ENCODE measurements at regions of chr9 and their contacts with region 1.

Region 1: GRCh38 chr9:116661037-116661954 is 25.8 kb upstream of the TRIM32 start:
- DNase-seq: peak; percentile 74 to 81
- ATAC-seq: peak; percentile 96 to 99
- H3K4me3 ChIP-seq: no peak overlapping the region
- H3K27ac ChIP-seq: peak overlapping the region; percentile 47 to 66; a peak in 5 of 6 replicates
- H3K4me1 ChIP-seq: peaks cover 19% of the 10 kb centered on the region
- CTCF ChIP-seq: peak; percentile 89
- EP300 ChIP-seq: no peak
- POLR2A ChIP-seq: no peak
- RAD21 ChIP-seq: peak; percentile 91 to 94

Region 2: DNA sequence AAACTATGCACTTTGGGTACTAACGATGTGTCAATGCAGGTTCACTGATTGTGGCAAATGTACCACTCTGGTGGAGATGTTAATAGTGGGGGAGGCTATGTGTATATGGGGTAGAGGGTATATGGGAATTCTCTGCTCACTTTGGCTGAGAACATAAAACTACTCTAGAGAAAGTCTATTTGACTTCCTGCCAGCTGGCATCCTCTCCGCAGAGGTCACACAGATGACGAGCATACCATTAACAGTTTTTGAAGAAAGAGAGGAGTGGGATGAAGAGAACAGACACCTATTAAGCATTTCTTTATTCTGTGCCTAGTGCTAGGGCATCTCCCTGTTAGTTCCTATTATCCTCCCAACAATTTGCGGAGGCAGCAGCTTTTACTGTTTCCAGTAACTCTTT is 32.6 kb before region 1 on chr9:
- CTCF ChIA-PET with region 1: no interaction called
- POLR2A ChIA-PET with region 1: no interaction called
- DNase-seq: no peak
- ATAC-seq: no peak
- H3K4me3 ChIP-seq: no peak overlapping the region
- H3K27ac ChIP-seq: no peak overlapping the region
- H3K4me1 ChIP-seq: no peaks in the 10 kb centered on the region; the same call in 2 of the 3 replicates
- CTCF ChIP-seq: no peak
- EP300 ChIP-seq: no peak
- POLR2A ChIP-seq: no peak
- RAD21 ChIP-seq: no peak

Region 3: GRCh38 chr9:116646661-116647512 is 14.4 kb before region 1 on chr9:
- CTCF ChIA-PET with region 1: interaction called, 19 read pairs
- POLR2A ChIA-PET with region 1: no interaction called
- DNase-seq: peak; percentile 21 to 53
- ATAC-seq: peak; percentile 90 to 95
- H3K4me3 ChIP-seq: no peak overlapping the region
- H3K27ac ChIP-seq: peak overlapping the region; percentile 47 to 64
- H3K4me1 ChIP-seq: peaks cover 7% of the 10 kb centered on the region; the same call in 2 of the 3 replicates
- CTCF ChIP-seq: peak; percentile 91
- EP300 ChIP-seq: no peak
- POLR2A ChIP-seq: no peak
- RAD21 ChIP-seq: peak; percentile 82 to 84

Region 4: DNA sequence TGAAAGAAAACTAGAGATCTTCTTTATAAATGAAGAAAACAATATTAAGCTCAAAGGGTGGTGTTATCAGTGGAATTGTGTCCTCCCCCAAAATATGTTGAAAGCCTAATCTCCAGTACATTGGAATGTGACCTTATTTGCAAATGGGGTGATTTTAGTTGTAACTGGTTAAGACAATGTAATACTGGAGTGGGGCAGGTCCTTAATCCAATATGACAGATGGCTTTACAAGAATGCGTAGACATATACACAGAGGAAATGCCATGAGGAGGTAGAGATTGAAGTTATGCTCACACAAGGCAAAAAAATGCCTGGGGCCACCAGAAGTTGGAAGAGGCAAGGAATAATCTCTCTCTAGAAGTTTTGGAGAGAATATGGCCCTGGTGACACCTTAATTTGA is 12.1 kb after region 1 on chr9:
- CTCF ChIA-PET with region 1: interaction called, 10 read pairs
- POLR2A ChIA-PET with region 1: no interaction called
- DNase-seq: no peak
- ATAC-seq: no peak
- H3K4me3 ChIP-seq: no peak overlapping the region
- H3K27ac ChIP-seq: no peak overlapping the region
- H3K4me1 ChIP-seq: 0 out of 3 replicates have a peak, but pooled peaks cover 3% of the 10 kb centered on the region
- CTCF ChIP-seq: no peak
- EP300 ChIP-seq: no peak
- POLR2A ChIP-seq: no peak
- RAD21 ChIP-seq: no peak

Region 5: GRCh38 chr9:116935149-116935833 is 274.0 kb after region 1 on chr9:
- CTCF ChIA-PET with region 1: no interaction called
- POLR2A ChIA-PET with region 1: no interaction called
- DNase-seq: no peak
- ATAC-seq: no peak
- H3K4me3 ChIP-seq: no peak overlapping the region
- H3K27ac ChIP-seq: no peak overlapping the region
- H3K4me1 ChIP-seq: no peaks in the 10 kb centered on the region
- CTCF ChIP-seq: no peak
- EP300 ChIP-seq: no peak
- POLR2A ChIP-seq: no peak
- RAD21 ChIP-seq: no peak